ENCODE measurements at regions of chr16 and their contacts with region 1.

Region 1: GRCh38 chr16:77584205-77584859 is 138.0 kb upstream of the NUDT7 start:
- DNase-seq: peak; percentile 77
- H3K4me3 Mint-ChIP-seq: no peak overlapping the region
- H3K27ac Mint-ChIP-seq: no peak overlapping the region
- H3K4me1 Mint-ChIP-seq: peaks cover 11% of the 10 kb centered on the region
- H3K27me3 Mint-ChIP-seq: peaks cover 31% of the 10 kb centered on the region
- CTCF ChIP-seq: peak; percentile 87

Region 2: GRCh38 chr16:77250400-77250799 is 333.9 kb before region 1 on chr16:
- CTCF ChIA-PET with region 1: interaction called, 20 read pairs
- POLR2A ChIA-PET with region 1: no interaction called
- intact Hi-C with region 1: no loop called
- DNase-seq: no peak
- H3K4me3 Mint-ChIP-seq: no peak overlapping the region
- H3K27ac Mint-ChIP-seq: no peak overlapping the region
- H3K4me1 Mint-ChIP-seq: no peaks in the 10 kb centered on the region
- H3K27me3 Mint-ChIP-seq: no peaks in the 10 kb centered on the region
- CTCF ChIP-seq: no peak

Region 3: GRCh38 chr16:77424871-77425604 is 159.3 kb before region 1 on chr16:
- CTCF ChIA-PET with region 1: interaction called, 11 read pairs
- POLR2A ChIA-PET with region 1: no interaction called
- intact Hi-C with region 1: no loop called
- DNase-seq: no peak
- H3K4me3 Mint-ChIP-seq: no peak overlapping the region
- H3K27ac Mint-ChIP-seq: no peak overlapping the region
- H3K4me1 Mint-ChIP-seq: peaks cover 2% of the 10 kb centered on the region
- H3K27me3 Mint-ChIP-seq: peaks cover 60% of the 10 kb centered on the region
- CTCF ChIP-seq: no peak

Region 4: DNA sequence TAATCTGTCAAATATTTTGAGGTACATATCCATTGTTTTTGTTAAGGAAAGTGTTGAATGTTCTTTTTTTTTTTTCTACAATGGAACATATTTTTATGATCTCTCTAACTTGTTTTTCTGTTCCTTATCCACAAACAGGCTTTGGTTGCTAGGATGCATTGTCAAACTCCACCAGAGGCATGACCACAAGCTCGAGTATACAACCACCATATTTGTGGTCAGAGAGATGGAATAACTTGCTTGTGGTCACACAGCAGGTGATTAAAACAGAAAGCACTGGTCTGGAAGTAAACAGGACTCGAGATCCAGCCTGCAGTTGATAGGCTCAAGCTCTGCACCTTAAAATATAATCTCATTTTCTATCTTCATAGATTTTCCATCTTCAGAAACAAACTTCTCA is 43.7 kb before region 1 on chr16:
- CTCF ChIA-PET with region 1: interaction called, 13 read pairs
- POLR2A ChIA-PET with region 1: no interaction called
- intact Hi-C with region 1: no loop called
- DNase-seq: no peak
- H3K4me3 Mint-ChIP-seq: no peak overlapping the region
- H3K27ac Mint-ChIP-seq: no peak overlapping the region
- H3K4me1 Mint-ChIP-seq: no peaks in the 10 kb centered on the region
- H3K27me3 Mint-ChIP-seq: peaks cover 66% of the 10 kb centered on the region
- CTCF ChIP-seq: no peak

Region 5: GRCh38 chr16:77569406-77569805 is 14.9 kb before region 1 on chr16:
- CTCF ChIA-PET with region 1: interaction called, 75 read pairs
- POLR2A ChIA-PET with region 1: no interaction called
- intact Hi-C with region 1: no loop called
- DNase-seq: no peak
- H3K4me3 Mint-ChIP-seq: no peak overlapping the region
- H3K27ac Mint-ChIP-seq: no peak overlapping the region
- H3K4me1 Mint-ChIP-seq: no peaks in the 10 kb centered on the region
- H3K27me3 Mint-ChIP-seq: peaks cover 78% of the 10 kb centered on the region
- CTCF ChIP-seq: no peak

Region 6: GRCh38 chr16:77617990-77618389 is 33.7 kb after region 1 on chr16:
- CTCF ChIA-PET with region 1: no interaction called
- POLR2A ChIA-PET with region 1: no interaction called
- intact Hi-C with region 1: no loop called
- DNase-seq: peak; percentile 16
- H3K4me3 Mint-ChIP-seq: no peak overlapping the region
- H3K27ac Mint-ChIP-seq: no peak overlapping the region
- H3K4me1 Mint-ChIP-seq: no peaks in the 10 kb centered on the region
- H3K27me3 Mint-ChIP-seq: peaks cover 33% of the 10 kb centered on the region
- CTCF ChIP-seq: no peak

Region 7: DNA sequence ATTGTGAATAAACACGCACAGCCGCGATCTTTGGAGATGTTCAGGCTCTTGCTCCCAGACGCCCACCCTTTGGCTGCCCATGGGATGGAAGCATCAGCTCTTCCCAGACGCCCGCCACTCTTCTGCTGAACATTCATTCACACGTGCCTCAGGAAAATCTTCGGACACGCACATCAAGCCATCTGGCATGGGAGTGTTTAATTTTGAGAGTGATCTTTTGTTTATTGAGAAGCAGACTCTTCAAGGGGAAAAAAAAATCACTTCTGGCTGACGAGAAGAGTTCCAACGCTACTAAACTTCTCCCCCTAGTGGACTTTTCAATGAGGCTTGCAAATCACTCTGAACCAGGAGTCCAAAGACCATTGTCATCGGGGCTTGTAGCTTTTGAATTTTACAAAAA is 76.0 kb after region 1 on chr16:
- CTCF ChIA-PET with region 1: interaction called, 61 read pairs
- POLR2A ChIA-PET with region 1: no interaction called
- intact Hi-C with region 1: loop called (anchors 1 kb)
- DNase-seq: peak; percentile 53
- H3K4me3 Mint-ChIP-seq: no peak overlapping the region
- H3K27ac Mint-ChIP-seq: no peak overlapping the region
- H3K4me1 Mint-ChIP-seq: peaks cover 4% of the 10 kb centered on the region
- H3K27me3 Mint-ChIP-seq: peaks cover 55% of the 10 kb centered on the region
- CTCF ChIP-seq: peak; percentile 55

Region 8: DNA sequence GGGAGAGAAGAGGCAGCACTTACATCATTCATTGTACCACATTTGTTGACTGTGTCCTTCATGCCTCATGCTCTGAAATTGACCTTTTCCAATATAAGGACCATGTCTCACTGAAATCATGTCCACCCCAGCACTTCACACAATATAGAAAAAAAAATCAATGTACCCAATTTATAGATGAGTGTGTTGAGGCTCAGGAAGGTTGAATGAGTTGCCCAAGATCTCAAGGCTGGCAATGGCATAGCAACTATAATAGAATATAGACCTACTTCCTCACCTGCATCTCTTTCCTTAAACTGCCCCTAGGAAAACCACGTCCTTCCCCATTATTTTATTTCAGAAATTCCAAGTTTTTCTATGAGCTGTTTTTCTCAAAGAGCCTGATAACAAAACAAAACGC is 203.1 kb after region 1 on chr16:
- CTCF ChIA-PET with region 1: no interaction called
- POLR2A ChIA-PET with region 1: no interaction called
- intact Hi-C with region 1: no loop called
- DNase-seq: no peak
- H3K4me3 Mint-ChIP-seq: no peak overlapping the region
- H3K27ac Mint-ChIP-seq: no peak overlapping the region
- H3K4me1 Mint-ChIP-seq: peaks cover 9% of the 10 kb centered on the region
- H3K27me3 Mint-ChIP-seq: peaks cover 61% of the 10 kb centered on the region
- CTCF ChIP-seq: no peak

Measured in MCF 10A (cell line).